ENCODE measurements at regions of chr20 and their contacts with region 1.

Region 1: GRCh38 chr20:50067866-50068612 is 44.9 kb downstream of the UBE2V1 start:
- DNase-seq: no peak
- ATAC-seq: no peak
- H3K4me3 ChIP-seq: no peak overlapping the region
- H3K27ac ChIP-seq: no peak overlapping the region
- H3K4me1 ChIP-seq: peaks cover 7% of the 10 kb centered on the region
- H3K27me3 ChIP-seq: no peaks in the 10 kb centered on the region
- CTCF ChIP-seq: no peak
- POLR2A ChIP-seq: no peak

Region 2: GRCh38 chr20:49982346-49983122 is 85.5 kb before region 1 on chr20 and contains the start of gene SNAI1:
- intact Hi-C with region 1: loop called (anchors 5 kb)
- DNase-seq: peak; percentile 78 to 86 (median 86)
- ATAC-seq: peak; percentile 95
- H3K4me3 ChIP-seq: no peak within 1 kb of the TSS
- H3K27ac ChIP-seq: peak within 1 kb of the TSS in 2 of 4 donors; percentile 9 to 12
- H3K4me1 ChIP-seq: peaks cover 21% of the 10 kb centered on the region
- H3K27me3 ChIP-seq: no peaks in the 10 kb centered on the region
- CTCF ChIP-seq: peak in 6 of 7 experiments; percentile 26 to 64 (median 38)
- POLR2A ChIP-seq: peak in 2 of 3 donors; percentile 87 to 91
- total RNA-seq, gene SNAI1: 0.78 to 3.3 TPM

Region 3: GRCh38 chr20:50346372-50347283 is 278.6 kb after region 1 on chr20:
- intact Hi-C with region 1: no loop called
- DNase-seq: peak; percentile 62 to 85 (median 80)
- ATAC-seq: peak; percentile 28
- H3K4me3 ChIP-seq: no peak overlapping the region
- H3K27ac ChIP-seq: peak overlapping the region; percentile 6 to 81 (median 36)
- H3K4me1 ChIP-seq: peaks cover 20% of the 10 kb centered on the region
- H3K27me3 ChIP-seq: no peaks in the 10 kb centered on the region
- CTCF ChIP-seq: no peak
- POLR2A ChIP-seq: peak in 2 of 3 donors; percentile 7 to 41